Uterus (tissue), 4 donors: ENCODE measurements at regions of chr1 and their contacts with region 1.

Region 1: GRCh38 chr1:19651141-19651737 is 7.1 kb downstream of the NBL1 start:
- DNase-seq: peak; percentile 64 to 75
- H3K4me3 ChIP-seq: no peak overlapping the region
- H3K27ac ChIP-seq: peak overlapping the region; percentile 86 to 96
- H3K4me1 ChIP-seq: peaks cover 5 to 30% of the 10 kb centered on the region in 2 donors
- H3K27me3 ChIP-seq: no peaks in the 10 kb centered on the region
- CTCF ChIP-seq: peak; percentile 58 to 83 (median 74)
- POLR2A ChIP-seq: no peak

Region 2: GRCh38 chr1:19341201-19342072 is 309.8 kb before region 1 on chr1:
- intact Hi-C with region 1: loop called (anchors 10 kb)
- DNase-seq: peak; percentile 77
- H3K4me3 ChIP-seq: no peak overlapping the region
- H3K27ac ChIP-seq: peak overlapping the region; percentile 53 to 54
- H3K4me1 ChIP-seq: peaks cover 0 to 5% of the 10 kb centered on the region in 2 donors
- H3K27me3 ChIP-seq: no peaks in the 10 kb centered on the region
- CTCF ChIP-seq: peak; percentile 57 to 87 (median 76)
- POLR2A ChIP-seq: no peak